Activated naive CD4-positive, alpha-beta T cell treated with anti-CD3 and anti-CD28 coated beads for 36 hours (primary cell): ENCODE measurements at regions of chr21 and their contacts with region 1.

Region 1: GRCh38 chr21:45130324-45130774 is 56.0 kb downstream of the ADARB1 start:
- DNase-seq: no peak
- H3K4me3 Mint-ChIP-seq: no peak overlapping the region
- H3K27ac Mint-ChIP-seq: no peak overlapping the region
- H3K4me1 Mint-ChIP-seq: peaks cover 32% of the 10 kb centered on the region
- H3K27me3 Mint-ChIP-seq: no peaks in the 10 kb centered on the region

Region 2: GRCh38 chr21:44949779-44950198 is 180.6 kb before region 1 on chr21:
- CTCF ChIA-PET with region 1: interaction called, 100 read pairs
- intact Hi-C with region 1: loop called (anchors 1 kb)
- DNase-seq: peak; percentile 92
- H3K4me3 Mint-ChIP-seq: no peak overlapping the region
- H3K27ac Mint-ChIP-seq: no peak overlapping the region
- H3K4me1 Mint-ChIP-seq: peaks cover 17% of the 10 kb centered on the region
- H3K27me3 Mint-ChIP-seq: no peaks in the 10 kb centered on the region

Region 3: GRCh38 chr21:44962403-44962966 is 167.9 kb before region 1 on chr21:
- CTCF ChIA-PET with region 1: interaction called, 15 read pairs
- intact Hi-C with region 1: no loop called
- DNase-seq: no peak
- H3K4me3 Mint-ChIP-seq: no peak overlapping the region
- H3K27ac Mint-ChIP-seq: no peak overlapping the region
- H3K4me1 Mint-ChIP-seq: peaks cover 32% of the 10 kb centered on the region
- H3K27me3 Mint-ChIP-seq: no peaks in the 10 kb centered on the region

Region 4: GRCh38 chr21:45004481-45005263 is 125.7 kb before region 1 on chr21:
- CTCF ChIA-PET with region 1: interaction called, 11 read pairs
- intact Hi-C with region 1: no loop called
- DNase-seq: peak; percentile 33
- H3K4me3 Mint-ChIP-seq: no peak overlapping the region
- H3K27ac Mint-ChIP-seq: no peak overlapping the region
- H3K4me1 Mint-ChIP-seq: peaks cover 5% of the 10 kb centered on the region
- H3K27me3 Mint-ChIP-seq: no peaks in the 10 kb centered on the region

Region 5: DNA sequence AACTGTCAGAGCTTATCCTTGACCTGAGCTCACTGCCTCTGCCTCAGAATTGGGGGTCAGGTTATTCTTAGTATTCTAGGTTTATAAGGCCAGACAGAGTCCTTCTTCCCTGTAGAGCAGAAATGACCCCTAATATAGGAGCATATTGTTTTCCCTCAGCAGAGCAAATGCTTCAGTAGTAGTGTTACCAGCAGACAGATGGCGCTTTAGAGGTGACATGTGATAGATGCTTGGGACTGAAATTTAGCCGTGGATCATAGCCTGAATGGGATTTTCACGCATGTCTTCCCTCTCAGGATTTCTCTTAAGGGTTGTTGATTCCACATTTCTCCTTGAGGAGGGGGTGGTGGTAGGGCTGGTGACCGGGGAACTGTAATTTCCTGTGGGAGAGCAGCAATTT is 31.5 kb before region 1 on chr21:
- CTCF ChIA-PET with region 1: interaction called, 50 read pairs
- intact Hi-C with region 1: loop called (anchors 1 kb)
- DNase-seq: no peak
- H3K4me3 Mint-ChIP-seq: no peak overlapping the region
- H3K27ac Mint-ChIP-seq: no peak overlapping the region
- H3K4me1 Mint-ChIP-seq: peaks cover 39% of the 10 kb centered on the region
- H3K27me3 Mint-ChIP-seq: no peaks in the 10 kb centered on the region

Region 6: DNA sequence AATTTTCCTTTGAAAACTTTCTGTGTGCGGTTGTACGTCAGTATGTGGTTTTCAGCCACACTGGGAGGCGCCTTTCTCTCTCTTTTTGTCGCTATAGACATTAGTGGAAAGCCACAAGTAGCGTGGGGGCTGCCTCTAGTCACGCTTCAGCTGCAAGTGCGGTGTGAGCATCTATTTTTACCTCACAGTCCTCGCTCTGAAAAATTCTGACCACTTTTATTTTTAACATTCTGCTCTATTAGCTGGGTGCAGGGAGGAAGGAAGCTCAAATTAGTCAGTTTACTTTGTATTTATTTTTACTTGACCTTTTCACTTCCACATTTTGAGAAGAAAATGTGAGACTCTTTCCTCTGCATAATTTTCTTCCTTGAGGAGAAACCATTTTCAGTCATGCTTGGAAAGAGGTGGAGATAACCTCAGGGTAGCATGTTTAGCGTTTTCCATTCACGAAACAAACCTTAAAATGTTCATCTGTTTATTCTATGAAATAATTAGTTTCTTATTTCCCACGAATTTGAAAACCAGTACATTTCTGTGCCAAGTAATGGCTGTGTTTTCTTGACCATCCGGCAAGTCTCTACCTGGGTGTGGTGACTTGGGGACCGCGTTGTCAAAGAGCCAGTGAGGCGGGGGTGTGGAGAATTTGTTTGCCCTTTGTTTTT is 20.4 kb before region 1 on chr21:
- CTCF ChIA-PET with region 1: interaction called, 50 read pairs
- intact Hi-C with region 1: no loop called
- DNase-seq: peak; percentile 72
- H3K4me3 Mint-ChIP-seq: peak overlapping the region; percentile 54
- H3K27ac Mint-ChIP-seq: peak overlapping the region; percentile 78
- H3K4me1 Mint-ChIP-seq: peaks cover 68% of the 10 kb centered on the region
- H3K27me3 Mint-ChIP-seq: no peaks in the 10 kb centered on the region